ENCODE measurements at regions of chr1 and their contacts with region 1.

Region 1: DNA sequence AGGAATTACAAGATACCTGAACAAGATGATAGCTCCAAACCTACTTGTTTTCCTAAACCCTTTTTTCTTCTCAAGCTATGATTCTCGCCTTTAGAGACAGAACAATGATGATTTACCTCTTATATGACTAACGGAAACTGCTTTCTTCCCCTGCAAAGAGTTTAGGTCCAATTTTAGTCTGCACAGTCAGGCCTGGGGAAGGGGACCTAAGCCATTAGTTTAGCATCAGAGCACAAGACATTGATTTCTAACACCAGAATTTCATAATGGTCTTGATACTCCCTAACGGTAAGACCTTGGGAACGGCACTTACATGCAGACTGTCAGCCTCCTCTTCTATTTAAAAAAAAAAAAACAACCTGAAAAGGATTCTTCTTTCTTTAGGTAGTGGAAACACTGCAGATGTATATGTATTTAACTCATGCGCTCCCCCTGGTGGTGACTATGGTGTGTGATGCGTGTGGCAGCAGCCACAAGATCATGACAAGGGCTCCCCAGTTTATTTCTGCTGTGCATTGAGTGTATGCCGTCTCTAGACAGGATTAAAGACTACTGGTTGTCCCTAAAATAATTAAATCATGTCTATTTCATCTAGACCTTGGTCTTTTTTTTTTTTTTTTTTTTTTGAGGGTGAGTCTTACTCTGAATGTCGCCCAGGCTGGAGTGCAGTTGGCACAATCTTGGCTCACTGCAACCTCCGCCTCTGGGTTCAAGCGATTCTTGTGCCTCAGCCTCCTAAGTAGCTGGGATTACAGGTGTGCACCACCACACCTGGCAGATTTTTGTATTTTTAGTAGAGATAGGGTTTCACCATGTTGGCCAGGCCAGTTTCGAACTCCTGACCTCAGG is 37.3 kb upstream of the TMEM222 start:
- DNase-seq: peak; percentile 80 to 93
- ATAC-seq: peak; percentile 93 to 99 (median 97)
- H3K4me3 ChIP-seq: no peak overlapping the region
- H3K4me3 Mint-ChIP-seq: no peak overlapping the region
- H3K27ac ChIP-seq: no peak overlapping the region
- H3K27ac Mint-ChIP-seq: peak overlapping the region in 1 of 2 donors; percentile 18
- H3K4me1 ChIP-seq: no peaks in the 10 kb centered on the region
- H3K4me1 Mint-ChIP-seq: peaks cover 0 to 4% of the 10 kb centered on the region in 2 donors
- H3K27me3 ChIP-seq: no peaks in the 10 kb centered on the region
- H3K27me3 Mint-ChIP-seq: no peaks in the 10 kb centered on the region
- CTCF ChIP-seq: peak; percentile 85

Region 2: DNA sequence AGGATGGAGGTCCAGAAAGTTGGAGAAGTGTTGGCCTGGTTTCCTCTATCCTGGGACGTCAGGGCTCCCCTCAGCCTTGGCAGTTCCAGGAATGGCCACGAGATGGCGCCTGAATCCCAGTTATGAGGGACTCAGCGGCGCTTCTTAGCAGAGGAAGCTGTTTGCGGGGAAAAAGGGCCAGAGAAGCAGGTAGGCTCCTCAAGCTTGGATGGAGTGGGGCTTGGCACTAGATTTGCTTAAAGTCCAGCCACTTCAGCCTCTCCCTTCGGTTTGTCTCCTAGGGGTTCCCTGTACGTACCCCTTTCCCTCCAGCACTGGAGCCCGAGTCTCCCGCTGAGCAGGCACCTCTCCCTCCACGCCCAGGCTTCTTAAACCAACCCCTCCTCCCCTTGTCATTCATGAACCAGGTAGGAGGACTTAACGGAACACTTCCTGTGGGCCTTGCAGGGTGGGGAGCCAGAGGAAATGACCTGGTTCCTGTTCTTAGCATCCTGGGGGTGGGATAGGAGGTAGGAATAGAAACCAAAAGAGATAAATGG is 240.0 kb before region 1 on chr1:
- intact Hi-C with region 1: loop called (anchors 2 kb)
- DNase-seq: peak; percentile 88 to 92
- ATAC-seq: peak; percentile 88 to 98 (median 94)
- H3K4me3 ChIP-seq: no peak overlapping the region
- H3K4me3 Mint-ChIP-seq: peak overlapping the region; percentile 45
- H3K27ac ChIP-seq: no peak overlapping the region
- H3K27ac Mint-ChIP-seq: no peak overlapping the region
- H3K4me1 ChIP-seq: peaks cover 14% of the 10 kb centered on the region
- H3K4me1 Mint-ChIP-seq: peaks cover 10 to 11% of the 10 kb centered on the region in 2 donors
- H3K27me3 ChIP-seq: no peaks in the 10 kb centered on the region
- H3K27me3 Mint-ChIP-seq: peaks cover 3 to 4% of the 10 kb centered on the region in 2 donors
- CTCF ChIP-seq: peak; percentile 99

Region 3: DNA sequence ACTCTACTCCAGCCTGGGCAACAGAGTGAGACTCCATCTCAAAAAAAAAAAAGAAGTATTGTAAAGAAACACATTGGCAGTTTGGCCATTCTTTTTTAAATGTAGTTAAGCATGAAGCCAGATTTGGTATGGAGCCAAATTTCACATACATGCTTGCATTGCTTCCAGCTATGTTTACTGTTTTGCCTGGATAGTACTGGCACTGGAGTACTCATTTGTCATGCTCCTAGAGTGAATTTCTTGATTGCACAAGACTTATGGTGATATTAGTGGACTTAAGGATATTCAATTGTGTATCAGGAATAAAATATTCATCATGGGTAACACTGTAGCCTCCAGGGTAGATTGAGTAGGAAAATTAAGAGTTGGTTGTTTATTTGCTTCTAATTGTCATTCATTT is 105.3 kb before region 1 on chr1:
- intact Hi-C with region 1: no loop called
- DNase-seq: no peak
- ATAC-seq: no peak
- H3K4me3 ChIP-seq: no peak overlapping the region
- H3K4me3 Mint-ChIP-seq: no peak overlapping the region
- H3K27ac ChIP-seq: no peak overlapping the region
- H3K27ac Mint-ChIP-seq: no peak overlapping the region
- H3K4me1 ChIP-seq: no peaks in the 10 kb centered on the region
- H3K4me1 Mint-ChIP-seq: no peaks in the 10 kb centered on the region
- H3K27me3 ChIP-seq: no peaks in the 10 kb centered on the region
- H3K27me3 Mint-ChIP-seq: no peaks in the 10 kb centered on the region
- CTCF ChIP-seq: no peak

Region 4: GRCh38 chr1:27201295-27201694 is 83.4 kb before region 1 on chr1:
- intact Hi-C with region 1: loop called (anchors 1 kb)
- DNase-seq: no peak
- ATAC-seq: no peak
- H3K4me3 ChIP-seq: no peak overlapping the region
- H3K4me3 Mint-ChIP-seq: no peak overlapping the region
- H3K27ac ChIP-seq: no peak overlapping the region
- H3K27ac Mint-ChIP-seq: no peak overlapping the region
- H3K4me1 ChIP-seq: no peaks in the 10 kb centered on the region
- H3K4me1 Mint-ChIP-seq: peaks cover 6 to 7% of the 10 kb centered on the region in 2 donors
- H3K27me3 ChIP-seq: no peaks in the 10 kb centered on the region
- H3K27me3 Mint-ChIP-seq: no peaks in the 10 kb centered on the region
- CTCF ChIP-seq: no peak

Region 5: GRCh38 chr1:27306892-27307761 is 22.5 kb after region 1 on chr1:
- intact Hi-C with region 1: no loop called
- DNase-seq: no peak
- ATAC-seq: no peak
- H3K4me3 ChIP-seq: no peak overlapping the region
- H3K4me3 Mint-ChIP-seq: no peak overlapping the region
- H3K27ac ChIP-seq: no peak overlapping the region
- H3K27ac Mint-ChIP-seq: peak overlapping the region in 1 of 2 donors; percentile 13
- H3K4me1 ChIP-seq: no peaks in the 10 kb centered on the region
- H3K4me1 Mint-ChIP-seq: no peaks in the 10 kb centered on the region
- H3K27me3 ChIP-seq: no peaks in the 10 kb centered on the region
- H3K27me3 Mint-ChIP-seq: no peaks in the 10 kb centered on the region
- CTCF ChIP-seq: no peak

Region 6: GRCh38 chr1:29245876-29246275 is 1961.2 kb after region 1 on chr1:
- intact Hi-C with region 1: no loop called
- DNase-seq: no peak
- ATAC-seq: no peak
- H3K4me3 ChIP-seq: no peak overlapping the region
- H3K4me3 Mint-ChIP-seq: no peak overlapping the region
- H3K27ac ChIP-seq: no peak overlapping the region
- H3K27ac Mint-ChIP-seq: no peak overlapping the region
- H3K4me1 ChIP-seq: no peaks in the 10 kb centered on the region
- H3K4me1 Mint-ChIP-seq: no peaks in the 10 kb centered on the region
- H3K27me3 ChIP-seq: peaks cover 4% of the 10 kb centered on the region
- H3K27me3 Mint-ChIP-seq: peaks cover 6 to 19% of the 10 kb centered on the region in 2 donors
- CTCF ChIP-seq: no peak

Measured in natural killer cell (primary cell).